Posterior vena cava (tissue), 2 donors: ENCODE measurements at regions of chr5 and their contacts with region 1.

Region 1: GRCh38 chr5:97063251-97063650 is 79.2 kb downstream of the LIX1 start:
- DNase-seq: no peak

Region 2: GRCh38 chr5:96924016-96924443 is 139.2 kb before region 1 on chr5:
- intact Hi-C with region 1: no loop called
- DNase-seq: no peak

Region 3: DNA sequence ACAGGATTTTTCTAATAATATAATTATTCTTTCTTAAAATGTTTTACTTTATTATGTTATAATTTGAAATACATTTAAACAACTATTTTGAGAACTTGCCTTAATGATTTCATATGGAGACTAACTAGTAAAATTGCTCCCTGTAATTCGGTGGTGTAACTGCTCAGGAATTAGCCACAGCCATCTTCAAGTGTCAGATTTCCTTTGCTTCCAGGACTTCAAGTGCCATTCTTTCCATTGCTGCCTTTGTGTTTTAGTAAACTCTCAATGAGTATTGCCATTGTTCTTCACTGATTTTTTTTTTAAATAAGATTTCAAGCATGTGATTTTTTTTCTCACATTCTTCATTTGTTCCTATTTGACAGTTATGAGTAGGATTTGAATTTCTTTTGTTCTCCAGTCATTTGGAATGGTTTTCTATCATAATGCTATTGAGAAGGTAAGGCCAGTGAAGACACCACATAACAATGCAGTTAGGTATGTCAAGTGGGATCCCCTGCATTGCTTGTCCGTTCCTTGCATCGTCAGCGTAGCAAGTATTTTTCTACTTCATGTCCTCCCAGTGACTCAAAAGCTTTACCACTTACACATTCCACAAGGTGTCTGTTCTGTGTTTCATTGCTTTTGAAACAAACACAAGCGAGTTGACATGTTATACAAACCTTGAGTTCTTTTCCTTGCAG is 43.7 kb before region 1 on chr5:
- intact Hi-C with region 1: loop called in 1 of 2 experiments (anchors 1 kb)
- DNase-seq: no peak

Region 4: GRCh38 chr5:97183100-97183929 is 120.1 kb after region 1 on chr5 and contains the start of gene RIOK2:
- intact Hi-C with region 1: no loop called
- DNase-seq: peak; percentile 98
- total RNA-seq, gene RIOK2: 18.3 to 24.2 TPM